GM18951 (cell line): ENCODE measurements at regions of chr4 and their contacts with region 1.

Region 1: DNA sequence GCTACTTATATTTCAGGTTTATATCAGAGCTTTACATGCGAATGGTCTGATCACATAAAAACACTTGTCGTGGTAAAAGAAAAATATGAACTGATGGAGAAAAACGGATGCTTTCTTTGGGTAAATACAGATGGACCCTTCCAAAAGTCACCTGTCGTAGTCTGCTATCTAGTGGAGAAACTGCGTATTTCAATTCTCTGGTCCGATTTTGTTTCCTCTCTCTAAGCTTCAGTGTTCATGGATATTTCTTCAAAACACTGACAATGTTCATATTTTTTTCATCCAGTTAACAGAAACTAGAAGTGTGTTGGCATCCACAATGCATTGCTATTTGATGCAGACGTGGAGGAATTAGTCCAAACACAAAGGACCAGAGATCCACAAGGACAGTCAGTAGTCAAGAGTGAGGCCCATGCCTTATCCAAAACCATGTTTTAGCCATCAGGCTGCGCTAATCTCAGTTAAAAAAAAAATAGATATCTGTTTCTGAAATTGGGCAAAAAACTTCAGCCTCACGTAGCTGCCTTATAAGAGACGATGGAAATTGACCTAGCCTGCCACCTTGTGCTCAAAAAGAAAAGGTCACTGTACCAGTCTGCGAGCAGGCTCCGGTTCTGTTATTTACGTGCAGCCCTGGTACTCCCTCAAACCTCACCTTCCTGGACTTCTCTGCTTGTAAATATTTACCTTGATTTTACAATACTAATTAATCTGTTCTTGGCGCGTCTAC is 16.0 kb downstream of the MEPE start:
- POLR2A ChIP-seq: no peak

Region 2: DNA sequence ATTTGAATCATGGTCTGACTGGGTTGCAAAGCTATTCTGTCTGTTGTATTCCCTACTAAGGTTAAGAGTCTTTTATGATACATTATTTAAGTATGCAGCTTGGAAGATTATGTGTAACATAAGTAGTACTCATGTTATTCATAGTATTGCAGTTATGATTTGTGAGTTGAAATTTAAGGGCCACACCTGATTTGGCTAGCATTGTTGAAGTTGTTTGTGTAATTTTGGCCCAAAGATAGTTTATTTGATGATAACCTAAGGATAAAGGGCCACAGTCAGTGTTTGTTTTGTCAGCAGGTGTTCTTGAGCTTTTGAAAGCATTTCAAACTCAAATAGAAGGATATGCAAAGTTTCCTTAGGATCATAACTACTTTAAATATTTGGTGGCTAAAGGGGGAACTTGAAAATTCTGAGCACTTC is 387.5 kb before region 1 on chr4:
- in situ Hi-C with region 1: no loop called
- POLR2A ChIP-seq: no peak

Region 3: DNA sequence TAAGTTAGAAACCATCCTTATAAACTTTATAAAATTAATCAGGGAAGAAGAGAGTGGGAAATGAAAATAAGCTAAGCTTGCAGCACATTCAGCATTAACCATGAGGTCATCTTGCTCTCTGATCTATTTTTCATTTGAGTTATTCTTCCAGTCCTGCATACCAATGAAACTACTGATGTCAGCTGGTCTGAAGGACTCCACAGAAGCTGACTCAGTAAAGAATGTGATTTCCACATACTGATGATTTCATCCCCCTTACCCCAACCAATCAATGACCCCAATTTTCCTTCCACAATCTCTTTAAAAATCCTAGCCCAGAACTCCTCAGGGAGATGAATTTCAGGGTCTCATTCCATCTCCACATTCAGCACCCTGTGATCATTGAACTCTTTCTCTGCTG is 259.3 kb before region 1 on chr4:
- in situ Hi-C with region 1: no loop called
- POLR2A ChIP-seq: no peak

Region 4: DNA sequence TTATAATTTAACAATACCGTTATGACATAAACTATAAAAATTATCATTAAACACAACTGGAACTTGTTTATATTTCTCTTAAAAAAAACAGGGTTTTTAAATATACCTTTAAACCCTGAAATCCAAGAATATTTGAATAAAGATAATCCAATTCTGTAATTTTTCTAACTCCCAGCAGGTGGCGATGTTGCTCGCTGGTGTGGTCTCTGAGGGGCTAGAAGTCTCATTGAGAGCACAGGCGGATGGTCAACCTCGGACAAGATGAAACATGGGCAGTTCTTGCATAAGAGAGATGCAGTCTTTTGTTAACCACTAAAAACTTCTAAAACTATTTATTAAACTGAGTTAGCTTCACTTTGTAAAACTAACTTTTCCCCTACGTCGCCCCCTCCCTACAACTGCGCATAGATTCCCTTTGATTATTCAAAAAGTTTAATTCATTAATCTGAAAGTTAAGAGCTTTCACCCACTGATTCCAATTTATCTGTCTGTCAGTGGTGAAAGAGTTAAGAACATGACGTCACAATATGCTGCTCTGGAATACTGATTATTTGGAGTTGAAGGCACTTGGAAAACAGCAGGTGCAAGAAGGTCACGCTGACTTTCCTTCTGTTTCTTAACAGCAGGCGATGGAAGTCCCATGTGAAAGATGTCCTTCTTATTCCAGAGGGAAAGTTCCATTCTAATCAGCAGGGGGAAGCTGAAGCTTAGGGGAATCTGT is 169.2 kb before region 1 on chr4:
- in situ Hi-C with region 1: loop called (anchors 10 kb)
- POLR2A ChIP-seq: no peak

Region 5: DNA sequence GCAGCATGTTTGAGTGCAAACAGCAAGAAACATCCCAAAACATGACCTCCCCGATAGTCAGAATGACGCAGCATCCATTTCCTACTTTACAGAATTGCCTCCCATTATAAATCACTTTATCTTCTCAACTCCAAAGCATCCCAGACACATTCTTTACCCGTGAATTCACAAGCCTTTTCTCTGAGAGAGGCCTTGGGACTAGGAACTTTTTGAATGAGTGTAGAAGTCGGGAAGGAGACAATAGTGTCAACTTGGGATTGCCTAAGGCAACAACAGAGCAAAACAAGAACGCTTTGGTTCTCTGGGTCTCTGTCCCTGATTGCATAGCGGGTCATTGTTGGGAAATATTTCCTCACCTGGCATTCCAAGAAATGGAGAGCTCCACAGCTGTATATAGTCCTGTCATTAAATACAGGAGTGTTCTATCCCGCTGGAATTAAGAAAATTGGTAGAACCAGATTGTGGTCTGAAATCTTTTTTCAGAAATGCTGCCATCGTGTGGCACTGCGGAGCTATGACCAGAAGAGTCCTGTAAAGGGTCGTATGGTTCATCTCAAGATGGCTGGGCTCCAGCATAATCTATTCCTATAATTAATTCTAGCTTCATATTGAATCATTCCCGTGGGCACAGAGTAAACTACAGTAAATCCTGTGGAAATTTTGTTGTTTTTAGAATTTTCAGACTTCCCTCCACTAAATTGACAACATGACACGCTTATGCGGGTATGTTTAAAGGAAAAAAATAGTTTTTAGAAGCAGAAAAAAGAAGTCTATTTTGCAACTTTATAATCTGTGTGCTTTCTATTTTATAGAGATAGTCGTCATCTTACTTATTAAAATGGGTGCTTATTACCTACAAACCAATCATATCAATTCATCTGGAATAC is 124.7 kb after region 1 on chr4:
- in situ Hi-C with region 1: loop called (anchors 10 kb)
- POLR2A ChIP-seq: no peak

Region 6: GRCh38 chr4:88211473-88212252 is 362.9 kb after region 1 on chr4:
- in situ Hi-C with region 1: loop called (anchors 25 kb)
- POLR2A ChIP-seq: no peak

Region 7: GRCh38 chr4:88523325-88524129 is 674.7 kb after region 1 on chr4 and contains the start of gene PYURF:
- in situ Hi-C with region 1: loop called (anchors 25 kb)
- POLR2A ChIP-seq: peak; percentile 96

Region 8: DNA sequence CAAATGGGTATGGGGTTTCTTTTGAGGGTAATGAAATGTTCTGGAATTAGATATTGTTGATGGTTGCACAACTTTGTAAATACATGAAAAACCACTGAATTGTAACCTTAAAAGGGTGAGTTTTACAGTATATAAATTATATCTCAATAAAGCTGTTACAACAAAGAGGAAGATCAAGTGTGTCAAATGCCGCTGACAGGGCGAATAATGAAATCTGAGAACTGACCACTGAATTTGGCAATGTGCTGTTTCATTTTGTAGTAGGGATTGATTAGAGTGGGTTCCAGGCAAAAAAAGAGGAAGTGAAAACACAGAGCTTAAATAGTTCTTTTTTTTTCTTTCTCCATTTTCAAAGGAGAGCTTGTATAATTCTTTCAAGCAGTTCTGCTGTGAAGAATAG is 1010.0 kb after region 1 on chr4:
- in situ Hi-C with region 1: no loop called
- POLR2A ChIP-seq: no peak